Naive thymus-derived CD4-positive, alpha-beta T cell (primary cell): ENCODE measurements at regions of chr19 and their contacts with region 1.

Region 1: DNA sequence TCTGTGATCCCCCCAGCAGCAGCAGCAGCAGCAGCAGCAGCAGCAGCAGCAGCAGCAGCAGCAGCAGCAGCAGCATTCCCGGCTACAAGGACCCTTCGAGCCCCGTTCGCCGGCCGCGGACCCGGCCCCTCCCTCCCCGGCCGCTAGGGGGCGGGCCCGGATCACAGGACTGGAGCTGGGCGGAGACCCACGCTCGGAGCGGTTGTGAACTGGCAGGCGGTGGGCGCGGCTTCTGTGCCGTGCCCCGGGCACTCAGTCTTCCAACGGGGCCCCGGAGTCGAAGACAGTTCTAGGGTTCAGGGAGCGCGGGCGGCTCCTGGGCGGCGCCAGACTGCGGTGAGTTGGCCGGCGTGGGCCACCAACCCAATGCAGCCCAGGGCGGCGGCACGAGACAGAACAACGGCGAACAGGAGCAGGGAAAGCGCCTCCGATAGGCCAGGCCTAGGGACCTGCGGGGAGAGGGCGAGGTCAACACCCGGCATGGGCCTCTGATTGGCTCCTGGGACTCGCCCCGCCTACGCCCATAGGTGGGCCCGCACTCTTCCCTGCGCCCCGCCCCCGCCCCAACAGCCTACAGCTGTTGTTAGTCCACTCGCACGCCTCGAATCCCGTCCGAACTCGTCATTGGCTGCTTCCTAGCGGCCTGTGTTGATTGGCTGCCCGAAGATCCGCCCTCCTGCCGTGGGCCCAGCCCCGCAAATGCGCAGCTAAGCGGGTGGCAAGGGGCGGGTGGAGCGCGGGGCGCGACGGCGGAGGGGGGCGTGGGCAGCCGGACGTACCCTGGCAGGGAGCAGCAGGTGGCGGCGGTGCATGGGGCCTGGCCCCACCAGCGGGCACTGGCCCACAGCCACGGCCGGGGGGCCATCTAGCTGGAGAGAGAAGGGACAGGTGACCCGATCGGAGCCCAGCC is 1.4 kb upstream of the SIX5 start:
- DNase-seq: peak; percentile 84 to 97 (median 93)
- ATAC-seq: peak; percentile 85
- H3K4me3 ChIP-seq: peak overlapping the region; percentile 95
- H3K4me3 Mint-ChIP-seq: peak overlapping the region; percentile 81 to 92 (median 88)
- H3K27ac ChIP-seq: peak overlapping the region; percentile 64
- H3K27ac Mint-ChIP-seq: peak overlapping the region in 7 of 9 donors; percentile 43 to 93 (median 85)
- H3K4me1 ChIP-seq: peaks cover 9 to 13% of the 10 kb centered on the region in 2 donors
- H3K4me1 Mint-ChIP-seq: peaks cover 0 to 16% (median 8%) of the 10 kb centered on the region in 7 donors
- H3K27me3 ChIP-seq: no peaks in the 10 kb centered on the region
- H3K27me3 Mint-ChIP-seq: peaks cover 0 to 28% (median 4%) of the 10 kb centered on the region in 5 donors

Region 2: GRCh38 chr19:45405435-45406225 is 364.8 kb before region 1 on chr19:
- CTCF ChIA-PET with region 1: no interaction called
- POLR2A ChIA-PET with region 1: no interaction called
- intact Hi-C with region 1: no loop called
- DNase-seq: peak; percentile 62 to 88 (median 81)
- ATAC-seq: peak; percentile 75
- H3K4me3 ChIP-seq: peak overlapping the region; percentile 77
- H3K4me3 Mint-ChIP-seq: peak overlapping the region; percentile 91 to 99 (median 97)
- H3K27ac ChIP-seq: peak overlapping the region; percentile 71
- H3K27ac Mint-ChIP-seq: peak overlapping the region; percentile 90 to 99 (median 94)
- H3K4me1 ChIP-seq: peaks cover 16 to 25% of the 10 kb centered on the region in 2 donors
- H3K4me1 Mint-ChIP-seq: peaks cover 28 to 53% (median 32%) of the 10 kb centered on the region in 7 donors
- H3K27me3 ChIP-seq: peaks cover 10 to 18% of the 10 kb centered on the region in 2 donors
- H3K27me3 Mint-ChIP-seq: peaks cover 15 to 27% (median 21%) of the 10 kb centered on the region in 5 donors

Region 3: DNA sequence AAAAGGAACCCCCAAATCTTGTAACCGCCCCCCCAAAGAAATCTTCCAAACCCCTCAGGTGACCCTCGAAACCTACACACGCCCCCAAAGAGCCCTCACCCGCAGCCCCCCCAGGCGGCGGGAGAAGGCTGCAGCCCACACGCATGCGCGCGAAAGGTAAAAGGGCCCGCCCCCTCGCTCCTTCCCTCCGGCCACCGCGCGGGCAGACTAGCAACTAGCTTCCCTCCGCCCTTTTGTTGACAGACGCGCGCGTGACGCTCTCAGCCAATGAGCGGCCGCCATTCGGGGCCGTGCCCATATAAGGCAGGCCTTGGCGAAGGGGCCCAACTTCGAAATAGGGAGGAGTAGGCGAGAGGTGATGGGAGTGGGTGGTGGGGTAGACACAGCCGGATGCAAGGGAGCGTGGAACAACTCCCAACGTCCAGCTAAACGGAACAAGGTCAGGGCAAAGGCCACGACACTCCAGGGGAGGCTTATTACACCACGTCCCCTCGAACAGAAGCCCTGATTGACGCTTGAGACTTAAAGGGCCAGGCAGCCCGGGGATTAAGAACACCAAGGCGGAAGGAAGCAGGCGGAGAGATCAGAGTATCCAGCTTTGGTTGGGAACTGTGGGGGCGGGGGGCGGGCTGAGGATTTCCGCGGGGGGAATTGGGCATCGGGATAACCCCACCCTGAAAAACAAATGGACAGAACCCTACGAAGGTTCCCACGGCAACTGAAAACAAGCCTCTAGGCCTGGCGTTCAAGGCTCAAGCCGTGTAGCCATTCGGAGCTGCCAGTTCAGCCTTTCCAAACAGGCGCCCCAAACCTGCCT is 53.1 kb before region 1 on chr19:
- CTCF ChIA-PET with region 1: interaction called, 9 read pairs
- POLR2A ChIA-PET with region 1: interaction called, 10 read pairs
- intact Hi-C with region 1: loop called (anchors 1 to 5 kb)
- DNase-seq: peak; percentile 92 to 99 (median 98)
- ATAC-seq: peak; percentile 98
- H3K4me3 ChIP-seq: peak overlapping the region; percentile 80
- H3K4me3 Mint-ChIP-seq: peak overlapping the region; percentile 89 to 99 (median 95)
- H3K27ac ChIP-seq: peak overlapping the region; percentile 89
- H3K27ac Mint-ChIP-seq: peak overlapping the region; percentile 88 to 97 (median 96)
- H3K4me1 ChIP-seq: peaks cover 17 to 26% of the 10 kb centered on the region in 2 donors
- H3K4me1 Mint-ChIP-seq: peaks cover 26 to 55% (median 38%) of the 10 kb centered on the region in 7 donors
- H3K27me3 ChIP-seq: no peaks in the 10 kb centered on the region
- H3K27me3 Mint-ChIP-seq: no peaks in the 10 kb centered on the region

Region 4: DNA sequence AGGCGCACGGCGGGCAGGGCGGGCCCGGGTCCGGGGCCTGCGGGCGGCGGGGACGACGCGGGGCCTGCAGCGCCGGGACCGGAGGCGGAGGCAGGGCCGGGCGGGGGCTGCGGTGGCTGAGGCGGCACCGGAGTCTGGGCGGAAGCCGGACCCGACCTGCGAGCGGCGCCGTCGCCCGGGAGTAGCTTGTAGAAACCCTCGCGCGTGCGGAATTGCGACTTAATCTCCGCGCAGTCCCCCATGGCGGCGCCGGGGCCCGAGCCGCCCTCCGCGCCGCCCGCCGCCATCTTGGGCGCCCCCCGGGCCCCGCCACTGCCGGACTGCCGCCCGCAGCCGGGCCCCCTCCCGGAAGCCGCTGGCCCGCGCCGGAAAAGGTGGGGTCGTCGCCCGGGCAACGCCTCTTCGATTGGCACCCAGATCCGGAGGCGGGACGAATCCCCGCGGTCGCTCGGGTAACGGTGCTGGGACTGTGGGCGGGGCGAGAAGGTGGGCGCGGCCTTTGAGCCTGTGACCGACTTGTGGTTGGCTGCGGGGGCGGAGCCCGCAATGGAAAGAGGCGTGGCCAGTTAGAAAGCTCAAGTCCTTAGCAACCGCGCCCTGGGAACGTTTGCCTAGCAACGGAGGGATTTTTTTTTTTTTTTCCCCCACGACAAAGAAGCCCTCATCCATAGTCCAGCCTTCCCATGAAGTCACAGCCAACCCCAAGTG is 22.2 kb after region 1 on chr19 and contains the start of gene DMWD:
- CTCF ChIA-PET with region 1: interaction called, 99 read pairs
- POLR2A ChIA-PET with region 1: interaction called, 5 read pairs
- intact Hi-C with region 1: loop called (anchors 1 kb)
- DNase-seq: peak; percentile 95 to 99 (median 98)
- ATAC-seq: peak; percentile 98
- H3K4me3 ChIP-seq: peak within 1 kb of the TSS; percentile 61
- H3K4me3 Mint-ChIP-seq: peak within 1 kb of the TSS; percentile 84 to 93 (median 88)
- H3K27ac ChIP-seq: peak within 1 kb of the TSS; percentile 15
- H3K27ac Mint-ChIP-seq: peak within 1 kb of the TSS; percentile 45 to 93 (median 85)
- H3K4me1 ChIP-seq: peaks cover 25 to 28% of the 10 kb centered on the region in 2 donors
- H3K4me1 Mint-ChIP-seq: peaks cover 31 to 44% (median 41%) of the 10 kb centered on the region in 7 donors
- H3K27me3 ChIP-seq: peaks cover 0 to 8% of the 10 kb centered on the region in 2 donors
- H3K27me3 Mint-ChIP-seq: peaks cover 6 to 76% (median 37%) of the 10 kb centered on the region in 5 donors
- total RNA-seq, gene DMWD: 18.7 to 43.2 (median 35.4) TPM

Region 5: DNA sequence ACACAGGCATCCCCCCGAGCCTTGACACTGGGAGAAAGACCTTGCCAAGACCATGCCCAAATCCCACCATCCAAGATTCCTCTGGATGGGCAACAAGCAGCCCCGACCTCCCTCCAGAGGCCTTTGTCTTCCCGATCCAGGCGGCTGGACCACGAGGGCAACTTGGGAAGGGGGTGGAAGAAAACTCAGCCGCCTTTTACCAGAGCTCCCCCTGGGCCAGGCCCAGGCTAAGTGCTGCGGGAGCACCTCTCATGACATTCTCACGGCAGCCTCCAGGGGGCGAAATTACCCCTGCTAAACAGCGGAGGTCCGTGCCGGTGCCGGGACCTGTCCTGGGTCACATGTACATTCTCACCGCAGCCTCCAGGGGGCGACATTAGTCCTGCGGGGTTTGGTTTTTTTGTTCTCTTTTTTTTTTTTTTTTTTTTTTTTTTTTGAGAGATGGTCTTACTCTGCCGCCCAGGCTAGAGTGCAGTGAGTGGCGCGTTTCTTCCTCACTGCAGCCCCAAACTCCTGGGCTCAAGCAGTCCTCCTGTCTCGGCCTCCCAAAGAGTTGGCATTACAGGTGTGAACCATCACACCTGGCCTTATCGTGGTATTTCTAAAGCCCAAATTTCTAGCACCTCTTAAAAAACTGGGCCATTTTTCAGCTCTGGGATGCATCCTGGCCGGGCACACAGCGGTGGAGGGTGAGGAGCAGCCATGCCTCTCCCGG is 46.7 kb after region 1 on chr19:
- CTCF ChIA-PET with region 1: interaction called, 11 read pairs
- POLR2A ChIA-PET with region 1: interaction called, 5 read pairs
- intact Hi-C with region 1: loop called (anchors 1 kb)
- DNase-seq: peak; percentile 88 to 96 (median 93)
- ATAC-seq: peak; percentile 100
- H3K4me3 ChIP-seq: no peak overlapping the region
- H3K4me3 Mint-ChIP-seq: peak overlapping the region in 5 of 10 donors; percentile 16 to 54 (median 45)
- H3K27ac ChIP-seq: no peak overlapping the region
- H3K27ac Mint-ChIP-seq: peak overlapping the region in 7 of 9 donors; percentile 25 to 93 (median 42)
- H3K4me1 ChIP-seq: peaks cover 0 to 4% of the 10 kb centered on the region in 2 donors
- H3K4me1 Mint-ChIP-seq: peaks cover 0 to 7% (median 5%) of the 10 kb centered on the region in 7 donors
- H3K27me3 ChIP-seq: no peaks in the 10 kb centered on the region
- H3K27me3 Mint-ChIP-seq: peaks cover 0 to 20% (median 17%) of the 10 kb centered on the region in 5 donors

Region 6: GRCh38 chr19:45827459-45828093 is 57.1 kb after region 1 on chr19:
- CTCF ChIA-PET with region 1: no interaction called
- POLR2A ChIA-PET with region 1: no interaction called
- intact Hi-C with region 1: no loop called
- DNase-seq: no peak
- ATAC-seq: no peak
- H3K4me3 ChIP-seq: no peak overlapping the region
- H3K4me3 Mint-ChIP-seq: no peak overlapping the region
- H3K27ac ChIP-seq: no peak overlapping the region
- H3K27ac Mint-ChIP-seq: peak overlapping the region in 2 of 9 donors; percentile 6 to 29
- H3K4me1 ChIP-seq: no peaks in the 10 kb centered on the region
- H3K4me1 Mint-ChIP-seq: peaks cover 0 to 14% (median 6%) of the 10 kb centered on the region in 7 donors
- H3K27me3 ChIP-seq: no peaks in the 10 kb centered on the region
- H3K27me3 Mint-ChIP-seq: no peaks in the 10 kb centered on the region

Region 7: GRCh38 chr19:45854167-45854778 is 83.8 kb after region 1 on chr19:
- CTCF ChIA-PET with region 1: no interaction called
- POLR2A ChIA-PET with region 1: no interaction called
- intact Hi-C with region 1: no loop called
- DNase-seq: no peak
- ATAC-seq: no peak
- H3K4me3 ChIP-seq: no peak overlapping the region
- H3K4me3 Mint-ChIP-seq: no peak overlapping the region
- H3K27ac ChIP-seq: no peak overlapping the region
- H3K27ac Mint-ChIP-seq: no peak overlapping the region
- H3K4me1 ChIP-seq: peaks cover 0 to 3% of the 10 kb centered on the region in 2 donors
- H3K4me1 Mint-ChIP-seq: peaks cover 4 to 25% (median 19%) of the 10 kb centered on the region in 7 donors
- H3K27me3 ChIP-seq: no peaks in the 10 kb centered on the region
- H3K27me3 Mint-ChIP-seq: no peaks in the 10 kb centered on the region

Region 8: DNA sequence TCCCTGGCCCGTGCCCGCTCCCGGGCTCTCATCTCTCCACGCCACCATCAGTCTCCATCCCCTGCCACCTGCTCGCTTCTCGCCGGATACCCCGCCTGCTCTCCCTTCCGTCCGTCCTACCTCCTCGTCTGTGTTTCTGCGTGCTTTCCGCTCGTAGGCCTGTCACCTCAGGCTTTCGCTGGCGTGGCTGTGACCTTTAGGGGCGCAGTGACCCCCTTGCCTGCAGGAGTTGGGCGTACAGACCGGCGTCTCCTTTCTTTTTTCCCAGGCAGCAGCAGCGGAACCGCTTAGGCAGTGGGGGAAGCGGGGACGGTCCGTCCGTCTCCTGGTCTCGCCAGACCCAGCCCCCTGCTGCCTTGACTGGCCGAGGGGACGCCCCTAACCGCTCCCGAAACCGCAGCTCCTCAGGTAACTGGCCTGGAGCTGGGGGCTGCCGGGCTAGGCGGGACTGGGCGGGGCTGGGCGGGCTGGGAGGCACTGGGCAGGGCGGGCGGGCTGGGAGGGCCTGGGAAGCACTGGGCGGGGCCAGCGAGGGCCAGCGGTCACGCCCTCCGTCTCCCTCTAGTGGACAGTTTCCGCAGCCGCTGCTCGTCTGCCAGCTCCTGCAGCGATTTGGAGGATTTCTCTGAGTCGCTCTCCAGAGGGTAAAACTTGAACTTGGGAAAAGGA is 246.1 kb after region 1 on chr19:
- CTCF ChIA-PET with region 1: interaction called, 3 read pairs
- POLR2A ChIA-PET with region 1: no interaction called
- intact Hi-C with region 1: loop called (anchors 1 to 5 kb)
- DNase-seq: peak; percentile 57 to 84 (median 75)
- ATAC-seq: peak; percentile 92
- H3K4me3 ChIP-seq: peak overlapping the region; percentile 62
- H3K4me3 Mint-ChIP-seq: peak overlapping the region; percentile 85 to 97 (median 92)
- H3K27ac ChIP-seq: peak overlapping the region; percentile 55
- H3K27ac Mint-ChIP-seq: peak overlapping the region in 7 of 9 donors; percentile 28 to 82 (median 50)
- H3K4me1 ChIP-seq: peaks cover 0 to 7% of the 10 kb centered on the region in 2 donors
- H3K4me1 Mint-ChIP-seq: peaks cover 11 to 23% (median 18%) of the 10 kb centered on the region in 7 donors
- H3K27me3 ChIP-seq: peaks cover 0 to 6% of the 10 kb centered on the region in 2 donors
- H3K27me3 Mint-ChIP-seq: peaks cover 5 to 17% (median 12%) of the 10 kb centered on the region in 5 donors